ENCODE measurements at regions of chr20 and their contacts with region 1.

Region 1: DNA sequence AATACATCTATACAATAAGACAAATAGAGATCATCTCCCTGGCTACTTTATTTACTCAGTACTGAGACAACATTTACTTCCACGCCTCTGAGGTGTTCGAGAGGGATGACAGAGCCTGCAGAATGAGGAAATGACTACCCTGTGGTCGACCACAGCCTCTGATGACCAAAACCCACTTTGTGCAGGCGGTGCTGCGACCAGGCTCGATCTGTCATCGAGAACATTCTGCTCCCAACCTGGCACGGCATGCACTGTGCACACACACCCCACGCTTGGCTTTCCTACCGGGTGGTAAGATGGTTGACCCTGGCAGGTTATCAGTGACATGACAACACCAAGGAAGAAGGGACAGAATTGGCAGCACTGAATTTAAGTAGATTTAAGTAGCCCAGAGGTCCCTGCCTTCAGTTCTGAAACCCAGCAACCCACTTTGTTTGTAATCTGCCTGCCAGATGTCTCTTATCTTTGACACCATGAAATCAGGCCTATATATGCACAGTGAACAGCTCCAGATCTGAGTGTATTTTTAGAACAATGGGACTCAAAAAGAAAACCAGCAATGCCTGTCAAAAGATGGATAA is 42.6 kb downstream of the TTI1 start:
- DNase-seq: peak; percentile 65
- H3K4me3 Mint-ChIP-seq: no peak overlapping the region
- H3K27ac Mint-ChIP-seq: peak overlapping the region; percentile 83
- H3K4me1 Mint-ChIP-seq: peaks cover 27% of the 10 kb centered on the region
- H3K27me3 Mint-ChIP-seq: no peaks in the 10 kb centered on the region

Region 2: DNA sequence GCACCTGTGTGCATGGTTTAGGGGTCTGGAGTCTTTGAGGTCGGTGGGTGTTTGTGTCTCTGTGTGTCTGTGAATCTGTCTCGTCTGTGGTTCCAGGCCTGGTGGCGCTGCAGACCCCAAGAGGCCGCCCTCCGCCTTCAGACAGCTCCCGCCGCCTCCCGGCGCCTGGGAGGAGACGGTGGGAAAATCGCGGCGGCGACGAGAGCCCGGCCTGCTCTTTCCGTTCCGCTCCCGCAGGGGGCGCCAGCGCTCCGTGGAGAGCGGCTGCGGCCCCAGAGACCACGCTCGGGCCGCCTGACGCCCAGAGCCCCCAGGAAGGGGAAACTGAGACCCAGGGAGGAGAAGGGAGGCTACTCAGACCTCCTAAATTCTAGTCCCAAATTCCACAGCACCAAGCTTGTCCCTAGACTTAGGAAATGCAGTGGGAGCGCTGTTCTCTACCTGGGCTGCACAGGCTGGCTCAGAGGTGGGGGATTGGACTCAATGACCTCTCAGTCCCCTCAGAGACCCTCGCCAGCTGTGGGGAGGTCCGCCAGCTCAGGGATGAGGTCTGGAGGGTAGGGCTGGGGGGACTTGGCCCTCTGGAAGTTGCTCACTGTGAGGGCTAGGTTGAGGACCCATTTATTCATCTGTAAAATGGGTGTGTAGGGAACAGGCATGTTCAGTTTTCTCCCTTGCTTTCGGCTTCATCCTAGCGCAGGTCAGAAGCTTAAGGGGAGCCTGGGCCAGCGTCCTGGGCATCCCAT is 426.1 kb before region 1 on chr20:
- intact Hi-C with region 1: loop called (anchors 5 kb)
- DNase-seq: peak; percentile 22
- H3K4me3 Mint-ChIP-seq: no peak overlapping the region
- H3K27ac Mint-ChIP-seq: no peak overlapping the region
- H3K4me1 Mint-ChIP-seq: no peaks in the 10 kb centered on the region
- H3K27me3 Mint-ChIP-seq: peaks cover 32% of the 10 kb centered on the region

Region 3: GRCh38 chr20:37856932-37857660 is 133.6 kb before region 1 on chr20:
- intact Hi-C with region 1: loop called (anchors 10 kb)
- DNase-seq: no peak
- H3K4me3 Mint-ChIP-seq: no peak overlapping the region
- H3K27ac Mint-ChIP-seq: peak overlapping the region; percentile 77
- H3K4me1 Mint-ChIP-seq: peaks cover 25% of the 10 kb centered on the region
- H3K27me3 Mint-ChIP-seq: no peaks in the 10 kb centered on the region

Region 4: DNA sequence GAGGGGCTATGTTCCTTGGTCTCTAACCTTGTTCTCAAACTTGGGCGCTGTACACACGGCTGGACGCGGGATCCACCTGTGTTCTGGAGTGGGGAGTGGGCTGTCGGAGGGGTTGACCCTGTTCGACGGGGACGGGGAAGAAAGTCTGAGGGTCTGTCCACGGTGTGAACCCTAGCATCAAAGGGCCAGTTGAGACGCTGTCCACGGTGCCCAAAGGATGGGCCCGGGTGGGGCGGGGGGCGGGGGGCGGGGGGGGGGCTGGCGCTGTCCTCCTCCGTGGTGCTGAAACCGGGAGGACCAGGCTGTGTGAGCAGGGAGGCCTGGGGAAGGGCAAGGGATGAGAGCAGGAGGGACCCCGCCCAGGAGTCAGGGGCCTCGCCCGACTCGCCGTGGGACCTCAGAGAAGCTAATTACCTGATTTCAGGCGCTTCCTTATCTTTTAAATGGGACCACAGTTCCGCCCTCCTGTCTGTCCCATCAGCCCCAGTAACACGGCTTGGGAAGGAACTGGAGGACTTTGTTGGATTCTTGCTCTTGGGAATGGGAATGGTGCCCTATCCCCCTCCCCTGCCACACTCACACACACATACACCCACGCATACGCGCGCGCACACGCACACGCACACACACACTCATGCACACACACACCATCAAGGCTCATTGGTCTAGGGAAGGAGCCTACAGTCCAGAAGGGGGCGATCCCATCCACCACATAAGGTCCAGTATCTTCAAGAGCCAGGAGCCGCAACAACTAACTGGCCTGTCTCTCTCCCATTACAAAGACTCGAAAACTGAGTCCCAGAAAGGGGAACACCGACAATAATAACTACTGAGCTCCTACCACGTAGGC is 88.8 kb before region 1 on chr20:
- intact Hi-C with region 1: loop called (anchors 5 kb)
- DNase-seq: no peak
- H3K4me3 Mint-ChIP-seq: no peak overlapping the region
- H3K27ac Mint-ChIP-seq: no peak overlapping the region
- H3K4me1 Mint-ChIP-seq: peaks cover 10% of the 10 kb centered on the region
- H3K27me3 Mint-ChIP-seq: peaks cover 45% of the 10 kb centered on the region

Region 5: GRCh38 chr20:37922016-37922415 is 68.6 kb before region 1 on chr20:
- intact Hi-C with region 1: loop called (anchors 5 kb)
- DNase-seq: no peak
- H3K4me3 Mint-ChIP-seq: no peak overlapping the region
- H3K27ac Mint-ChIP-seq: peak overlapping the region; percentile 26
- H3K4me1 Mint-ChIP-seq: peaks cover 8% of the 10 kb centered on the region
- H3K27me3 Mint-ChIP-seq: peaks cover 5% of the 10 kb centered on the region

Region 6: GRCh38 chr20:38001173-38001872 is 10.7 kb after region 1 on chr20:
- intact Hi-C with region 1: loop called (anchors 1 kb)
- DNase-seq: no peak
- H3K4me3 Mint-ChIP-seq: no peak overlapping the region
- H3K27ac Mint-ChIP-seq: no peak overlapping the region
- H3K4me1 Mint-ChIP-seq: peaks cover 27% of the 10 kb centered on the region
- H3K27me3 Mint-ChIP-seq: no peaks in the 10 kb centered on the region